ENCODE measurements at regions of chr14 and their contacts with region 1.

Region 1: DNA sequence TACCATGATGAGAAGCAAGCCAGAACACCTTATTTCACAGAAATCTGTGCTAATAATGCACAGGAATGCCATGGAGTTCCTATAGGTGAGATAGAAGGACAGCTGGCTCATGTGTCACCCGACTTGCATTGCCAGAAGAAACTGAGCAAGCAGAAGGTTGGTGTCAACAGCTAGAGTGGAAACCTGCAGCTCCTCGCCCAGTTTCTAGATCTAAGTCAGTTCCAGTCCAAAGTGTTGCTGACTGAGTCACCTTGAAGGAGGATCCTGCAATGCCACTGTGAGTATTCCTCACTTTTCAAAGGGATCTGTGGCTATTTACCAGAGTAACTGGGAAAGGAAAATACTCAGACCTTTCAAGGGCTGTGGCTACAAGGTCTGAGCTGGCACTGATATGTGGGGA is 17.1 kb downstream of the CDKL1 start:
- DNase-seq: no peak
- H3K4me3 Mint-ChIP-seq: no peak overlapping the region
- H3K27ac Mint-ChIP-seq: no peak overlapping the region
- H3K4me1 Mint-ChIP-seq: no peaks in the 10 kb centered on the region
- H3K27me3 Mint-ChIP-seq: no peaks in the 10 kb centered on the region
- CTCF ChIP-seq: no peak

Region 2: DNA sequence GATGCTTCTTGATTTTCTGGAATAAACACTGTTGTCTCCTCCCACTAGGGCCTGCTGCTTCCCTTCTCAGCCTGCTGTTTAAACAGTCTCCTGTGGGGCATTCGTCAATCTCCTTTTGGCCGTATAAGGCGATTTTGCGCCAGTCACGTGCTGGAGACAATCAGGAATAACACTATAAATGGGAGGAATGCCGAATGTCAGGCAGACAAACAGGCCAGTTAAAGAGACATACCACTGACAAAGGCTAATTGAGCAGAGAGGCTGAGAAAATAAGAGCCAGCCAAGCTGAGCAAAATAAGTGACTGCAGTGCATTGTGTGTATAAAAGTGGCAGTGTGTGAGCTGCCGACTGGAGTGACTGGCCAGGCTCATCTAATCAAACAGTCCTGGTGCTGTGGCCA is 44.2 kb before region 1 on chr14:
- CTCF ChIA-PET with region 1: no interaction called
- POLR2A ChIA-PET with region 1: no interaction called
- intact Hi-C with region 1: no loop called
- DNase-seq: no peak
- H3K4me3 Mint-ChIP-seq: no peak overlapping the region
- H3K27ac Mint-ChIP-seq: no peak overlapping the region
- H3K4me1 Mint-ChIP-seq: peaks cover 8% of the 10 kb centered on the region
- H3K27me3 Mint-ChIP-seq: no peaks in the 10 kb centered on the region
- CTCF ChIP-seq: no peak

Region 3: DNA sequence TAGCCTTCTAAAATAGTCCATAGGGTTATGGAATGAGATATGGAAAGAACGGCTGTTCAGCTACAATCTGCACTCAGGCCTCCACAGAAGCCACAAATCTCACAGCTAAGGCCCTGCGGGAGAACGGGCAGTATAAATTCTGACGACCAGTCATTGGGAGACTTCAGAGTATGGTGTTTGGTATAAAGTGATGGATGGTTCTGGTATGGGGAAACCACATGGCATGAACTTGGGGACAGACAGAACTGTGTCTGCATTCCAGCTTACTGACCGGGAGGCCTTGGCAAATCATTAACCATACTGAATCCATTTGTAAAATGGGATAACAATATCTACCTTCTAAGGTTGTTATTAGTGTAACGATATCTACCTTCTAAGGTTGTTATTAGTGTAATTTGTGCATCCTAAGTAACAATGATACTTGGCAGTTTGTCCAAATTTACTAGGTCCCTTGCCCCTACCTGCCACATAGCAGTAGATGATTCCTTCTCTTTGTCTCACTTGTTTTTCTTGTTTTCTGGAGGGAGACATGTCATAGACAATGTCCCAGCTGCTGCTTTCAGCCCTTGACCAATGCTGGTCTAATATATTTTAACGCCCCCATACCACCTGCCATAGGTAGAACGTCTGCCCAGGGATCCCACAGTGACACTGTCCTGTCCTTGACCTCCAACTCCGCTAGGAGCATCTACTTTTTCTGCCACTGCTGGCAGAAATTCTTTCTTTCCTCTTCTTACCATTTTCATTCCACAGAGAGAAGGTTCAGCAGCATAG is 10.3 kb after region 1 on chr14:
- CTCF ChIA-PET with region 1: interaction called, 3 read pairs
- POLR2A ChIA-PET with region 1: no interaction called
- intact Hi-C with region 1: loop called (anchors 1 kb)
- DNase-seq: no peak
- H3K4me3 Mint-ChIP-seq: no peak overlapping the region
- H3K27ac Mint-ChIP-seq: no peak overlapping the region
- H3K4me1 Mint-ChIP-seq: peaks cover 12% of the 10 kb centered on the region
- H3K27me3 Mint-ChIP-seq: no peaks in the 10 kb centered on the region
- CTCF ChIP-seq: no peak

Region 4: GRCh38 chr14:50532502-50533240 is 153.1 kb after region 1 on chr14 and contains the start of gene MAP4K5:
- CTCF ChIA-PET with region 1: no interaction called
- POLR2A ChIA-PET with region 1: no interaction called
- intact Hi-C with region 1: no loop called
- DNase-seq: peak; percentile 89
- H3K4me3 Mint-ChIP-seq: peak within 1 kb of the TSS; percentile 80
- H3K27ac Mint-ChIP-seq: peak within 1 kb of the TSS; percentile 46
- H3K4me1 Mint-ChIP-seq: peaks cover 34% of the 10 kb centered on the region
- H3K27me3 Mint-ChIP-seq: no peaks in the 10 kb centered on the region
- CTCF ChIP-seq: peak; percentile 91
- total RNA-seq, gene MAP4K5: 43.8 and 45.7 TPM in 2 replicates

Measured in MCF 10A (cell line).